ENCODE measurements at regions of chr7 and their contacts with region 1.

Region 1: GRCh38 chr7:55255496-55256435 is 109.4 kb upstream of the LANCL2 start:
- DNase-seq: peak; percentile 87 to 91
- H3K4me3 ChIP-seq: peak overlapping the region in 2 of 3 donors; percentile 49
- H3K27ac ChIP-seq: peak overlapping the region in 2 of 3 donors; percentile 21 to 30
- H3K4me1 ChIP-seq: peaks cover 6 to 8% of the 10 kb centered on the region in 2 donors
- H3K27me3 ChIP-seq: no peaks in the 10 kb centered on the region
- CTCF ChIP-seq: peak; percentile 79 to 98 (median 88)
- POLR2A ChIP-seq: no peak

Region 2: DNA sequence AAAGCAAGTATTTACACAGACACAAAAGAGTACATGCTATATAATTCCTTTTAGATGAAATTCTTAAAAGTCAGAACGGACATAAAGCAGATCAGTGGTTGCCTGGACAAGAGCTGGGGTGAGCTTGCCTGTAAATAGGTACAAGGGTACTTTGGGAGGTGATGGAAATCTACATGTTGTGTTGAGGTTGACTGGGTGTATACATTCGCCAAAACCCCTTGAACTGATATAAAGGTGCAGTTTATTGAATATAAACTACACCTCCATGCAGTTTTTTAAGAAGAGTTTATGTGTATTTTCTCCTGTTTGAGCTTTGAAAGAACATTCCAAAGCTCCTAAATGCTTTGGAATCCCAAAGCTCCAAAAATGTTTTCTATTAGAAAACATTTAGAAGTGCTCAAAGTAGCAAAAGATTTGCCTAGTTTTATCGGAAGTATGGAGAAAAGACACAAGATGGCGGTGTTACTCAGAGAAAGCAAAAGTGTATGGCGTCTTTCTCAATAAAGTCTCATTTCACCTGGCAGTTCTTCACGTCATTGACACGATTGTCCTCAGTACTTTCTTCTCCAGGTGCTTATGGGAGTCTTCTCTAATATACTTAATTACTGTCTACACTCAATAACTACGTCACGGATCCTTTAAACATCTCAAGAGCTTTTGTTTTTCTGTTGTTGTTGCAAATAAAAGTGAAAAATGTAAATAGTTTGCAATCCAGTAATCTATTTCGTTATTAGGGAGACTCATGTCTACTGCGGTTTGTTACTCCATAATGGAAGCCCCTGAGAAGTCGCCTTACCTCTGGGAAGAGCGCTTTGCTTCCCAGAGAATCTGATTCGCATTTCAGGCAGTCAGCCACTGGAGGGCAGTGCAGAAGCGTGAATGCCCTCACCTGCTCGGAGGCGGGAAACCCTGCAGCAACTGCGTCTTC is 482.0 kb before region 1 on chr7:
- intact Hi-C with region 1: loop called (anchors 5 kb)
- DNase-seq: peak; percentile 83 to 88
- H3K4me3 ChIP-seq: no peak overlapping the region
- H3K27ac ChIP-seq: no peak overlapping the region
- H3K4me1 ChIP-seq: peaks cover 0 to 3% of the 10 kb centered on the region in 2 donors
- H3K27me3 ChIP-seq: no peaks in the 10 kb centered on the region
- CTCF ChIP-seq: peak in 5 of 6 experiments; percentile 75 to 92 (median 84)
- POLR2A ChIP-seq: no peak

Region 3: GRCh38 chr7:54792383-54792782 is 463.4 kb before region 1 on chr7:
- intact Hi-C with region 1: loop called (anchors 5 kb)
- DNase-seq: no peak
- H3K4me3 ChIP-seq: no peak overlapping the region
- H3K27ac ChIP-seq: no peak overlapping the region
- H3K4me1 ChIP-seq: peaks cover 0 to 6% of the 10 kb centered on the region in 2 donors
- H3K27me3 ChIP-seq: no peaks in the 10 kb centered on the region
- CTCF ChIP-seq: no peak
- POLR2A ChIP-seq: no peak

Region 4: DNA sequence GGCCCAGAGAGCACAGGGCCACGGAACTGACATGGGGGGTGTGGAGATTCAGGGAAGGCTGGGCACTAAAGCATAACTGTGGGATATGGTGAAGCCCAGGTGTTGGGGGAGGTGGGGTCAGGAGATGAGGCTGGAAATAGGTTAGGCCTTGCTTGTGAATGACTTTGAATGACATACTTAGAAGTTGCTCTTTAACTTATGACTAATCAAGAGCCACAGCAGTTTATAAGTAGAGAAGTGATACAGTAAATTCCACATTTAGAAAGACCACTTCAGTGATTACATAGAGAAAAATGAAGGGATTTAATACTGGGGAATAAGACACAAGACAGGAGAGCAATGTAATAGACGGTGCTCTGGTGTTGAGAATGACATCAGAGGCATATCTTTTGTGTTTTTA is 376.0 kb before region 1 on chr7:
- intact Hi-C with region 1: loop called (anchors 5 kb)
- DNase-seq: no peak
- H3K4me3 ChIP-seq: no peak overlapping the region
- H3K27ac ChIP-seq: no peak overlapping the region
- H3K4me1 ChIP-seq: peaks cover 0 to 6% of the 10 kb centered on the region in 2 donors
- H3K27me3 ChIP-seq: no peaks in the 10 kb centered on the region
- CTCF ChIP-seq: no peak
- POLR2A ChIP-seq: no peak

Region 5: GRCh38 chr7:55140221-55140940 is 115.4 kb before region 1 on chr7:
- intact Hi-C with region 1: no loop called
- DNase-seq: no peak
- H3K4me3 ChIP-seq: no peak overlapping the region
- H3K27ac ChIP-seq: no peak overlapping the region
- H3K4me1 ChIP-seq: peaks cover 5 to 21% of the 10 kb centered on the region in 2 donors
- H3K27me3 ChIP-seq: no peaks in the 10 kb centered on the region
- CTCF ChIP-seq: no peak
- POLR2A ChIP-seq: no peak

Region 6: GRCh38 chr7:55158541-55159382 is 97.0 kb before region 1 on chr7:
- intact Hi-C with region 1: loop called (anchors 10 kb)
- DNase-seq: no peak
- H3K4me3 ChIP-seq: no peak overlapping the region
- H3K27ac ChIP-seq: peak overlapping the region in 1 of 3 donors; percentile 4
- H3K4me1 ChIP-seq: no peaks in the 10 kb centered on the region
- H3K27me3 ChIP-seq: no peaks in the 10 kb centered on the region
- CTCF ChIP-seq: no peak
- POLR2A ChIP-seq: no peak

Region 7: GRCh38 chr7:55423277-55423711 is 167.5 kb after region 1 on chr7:
- intact Hi-C with region 1: no loop called
- DNase-seq: no peak
- H3K4me3 ChIP-seq: no peak overlapping the region
- H3K27ac ChIP-seq: no peak overlapping the region
- H3K4me1 ChIP-seq: peaks cover 6 to 11% of the 10 kb centered on the region in 2 donors
- H3K27me3 ChIP-seq: no peaks in the 10 kb centered on the region
- CTCF ChIP-seq: no peak
- POLR2A ChIP-seq: no peak

Measured in thyroid gland (tissue), 4 donors.